ENCODE measurements at regions of chr2 and their contacts with region 1.

Region 1: DNA sequence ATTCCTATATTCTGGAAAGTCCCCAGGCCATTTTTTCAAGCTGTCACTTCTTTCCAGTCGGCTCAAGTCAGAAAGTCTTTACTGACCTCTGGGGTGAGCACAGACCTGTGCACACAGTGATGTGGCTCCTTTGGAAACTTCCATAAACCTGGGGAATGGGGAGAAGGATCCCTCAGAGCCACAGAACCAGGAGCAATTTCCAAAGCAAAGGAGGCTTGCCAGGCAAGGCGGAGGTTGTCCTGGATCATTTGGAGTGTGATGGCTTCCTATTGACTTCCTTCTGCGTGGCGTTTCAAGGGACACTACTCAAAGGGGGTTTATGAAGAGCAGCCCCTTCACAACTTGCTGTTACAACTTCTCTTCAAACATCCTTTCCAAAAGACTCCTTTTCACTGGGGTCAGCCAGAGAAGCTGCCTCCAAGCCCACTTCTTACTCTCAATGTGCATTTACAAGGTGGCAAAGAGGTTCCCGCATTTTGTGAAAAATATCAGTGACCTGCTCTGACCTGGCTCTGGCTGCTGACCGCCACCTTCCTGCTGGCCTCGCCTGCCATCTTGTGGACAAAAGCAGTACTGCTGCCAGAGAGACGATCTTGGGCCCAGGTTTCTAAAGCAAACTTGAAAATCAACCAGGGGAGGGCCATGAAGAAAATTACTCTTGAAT is 18.2 kb upstream of the TMEM247 start:
- DNase-seq: peak; percentile 95
- H3K4me3 ChIP-seq: no peak overlapping the region
- H3K27ac ChIP-seq: peak overlapping the region; percentile 30 to 71 (median 62)
- H3K4me1 ChIP-seq: peaks cover 15 to 44% (median 36%) of the 10 kb centered on the region in 4 donors
- H3K27me3 ChIP-seq: no peaks in the 10 kb centered on the region
- CTCF ChIP-seq: peak in 2 of 3 experiments; percentile 99 to 100
- EP300 ChIP-seq: no peak
- POLR2A ChIP-seq: no peak

Region 2: GRCh38 chr2:46062637-46063412 is 398.3 kb before region 1 on chr2:
- intact Hi-C with region 1: loop called (anchors 2 kb)
- DNase-seq: peak; percentile 96
- H3K4me3 ChIP-seq: no peak overlapping the region
- H3K27ac ChIP-seq: peak overlapping the region in 3 of 4 donors; percentile 42 to 50 (median 50)
- H3K4me1 ChIP-seq: peaks cover 19 to 21% (median 20%) of the 10 kb centered on the region in 4 donors
- H3K27me3 ChIP-seq: no peaks in the 10 kb centered on the region
- CTCF ChIP-seq: peak; percentile 86 to 88 (median 88)
- EP300 ChIP-seq: no peak
- POLR2A ChIP-seq: no peak

Region 3: GRCh38 chr2:46538393-46538792 is 77.2 kb after region 1 on chr2:
- intact Hi-C with region 1: loop called (anchors 2 kb)
- DNase-seq: no peak
- H3K4me3 ChIP-seq: no peak overlapping the region
- H3K27ac ChIP-seq: peak overlapping the region in 2 of 4 donors; percentile 41 to 60
- H3K4me1 ChIP-seq: peaks cover 11 to 28% (median 24%) of the 10 kb centered on the region in 4 donors
- H3K27me3 ChIP-seq: no peaks in the 10 kb centered on the region
- CTCF ChIP-seq: no peak
- EP300 ChIP-seq: no peak
- POLR2A ChIP-seq: no peak

Region 4: DNA sequence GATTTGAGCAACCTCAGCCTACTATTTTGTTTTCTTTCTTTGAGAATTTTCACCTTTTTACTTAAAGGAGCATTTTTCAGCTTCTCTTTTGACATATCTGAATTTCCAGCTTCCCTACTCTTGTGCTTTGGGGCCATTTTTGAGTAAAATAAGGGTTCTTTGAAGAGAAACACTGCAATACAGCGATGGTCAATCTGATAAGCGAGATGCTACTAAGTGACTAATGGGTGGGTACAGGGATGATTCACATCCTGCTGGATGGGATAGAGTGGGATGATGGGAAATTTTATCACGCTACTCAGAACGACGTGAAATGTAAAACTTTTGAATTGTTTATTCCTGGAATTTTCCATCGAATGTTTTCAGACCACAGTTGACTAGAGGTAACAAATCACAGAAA is 229.7 kb after region 1 on chr2:
- intact Hi-C with region 1: no loop called
- DNase-seq: no peak
- H3K4me3 ChIP-seq: no peak overlapping the region
- H3K27ac ChIP-seq: no peak overlapping the region
- H3K4me1 ChIP-seq: no peaks in the 10 kb centered on the region
- H3K27me3 ChIP-seq: no peaks in the 10 kb centered on the region
- CTCF ChIP-seq: no peak
- EP300 ChIP-seq: no peak
- POLR2A ChIP-seq: no peak

Measured in esophagus muscularis mucosa (tissue), 4 donors.